ENCODE measurements at regions of chr17 and their contacts with region 1.

Region 1: DNA sequence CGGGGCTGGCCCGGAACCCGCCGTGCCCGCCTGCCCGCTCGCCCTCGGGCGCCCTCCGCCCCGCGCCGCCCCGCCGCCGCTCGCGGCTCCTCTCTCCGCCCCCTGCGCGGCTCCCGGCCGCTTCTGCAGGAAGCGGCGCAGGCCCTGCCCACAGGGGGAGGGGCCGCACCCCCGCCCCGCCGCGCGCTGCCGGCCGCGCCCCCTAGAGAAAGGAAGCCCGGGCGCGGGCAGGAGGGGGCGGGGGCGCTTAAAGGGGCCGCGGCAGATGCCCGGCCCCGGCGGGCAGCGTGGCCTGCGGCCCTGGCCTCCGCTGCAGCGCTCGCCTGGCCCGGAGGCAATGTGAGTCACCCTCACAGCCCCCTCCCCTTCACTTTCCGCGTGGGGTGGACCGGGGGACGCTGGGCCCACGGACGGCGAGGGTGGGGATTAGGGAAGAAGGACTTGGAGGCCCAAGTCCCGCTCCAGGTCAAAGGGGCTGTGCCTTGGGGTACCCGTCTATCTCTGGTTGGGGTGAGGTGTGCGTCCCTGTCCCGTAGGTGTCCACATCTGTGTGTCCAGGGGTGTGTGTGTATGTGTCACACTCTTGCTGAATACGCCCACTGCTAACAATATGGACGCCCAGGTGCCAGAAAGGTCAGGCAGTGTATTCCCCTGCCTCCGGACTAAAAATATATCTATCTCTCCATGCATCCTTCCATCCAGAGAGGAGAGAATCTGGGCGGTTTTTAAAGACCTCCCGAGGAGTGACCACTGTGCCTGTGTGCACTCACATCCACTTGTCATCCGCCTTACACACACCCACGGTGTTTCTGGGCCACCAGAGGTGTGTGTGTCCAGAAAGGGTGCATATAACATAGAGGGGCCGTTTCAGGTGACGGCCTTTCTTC is at the start of gene GIT1:
- DNase-seq: peak; percentile 80

Region 2: GRCh38 chr17:29420128-29420527 is 169.6 kb before region 1 on chr17:
- CTCF ChIA-PET with region 1: no interaction called
- POLR2A ChIA-PET with region 1: no interaction called
- DNase-seq: no peak

Region 3: DNA sequence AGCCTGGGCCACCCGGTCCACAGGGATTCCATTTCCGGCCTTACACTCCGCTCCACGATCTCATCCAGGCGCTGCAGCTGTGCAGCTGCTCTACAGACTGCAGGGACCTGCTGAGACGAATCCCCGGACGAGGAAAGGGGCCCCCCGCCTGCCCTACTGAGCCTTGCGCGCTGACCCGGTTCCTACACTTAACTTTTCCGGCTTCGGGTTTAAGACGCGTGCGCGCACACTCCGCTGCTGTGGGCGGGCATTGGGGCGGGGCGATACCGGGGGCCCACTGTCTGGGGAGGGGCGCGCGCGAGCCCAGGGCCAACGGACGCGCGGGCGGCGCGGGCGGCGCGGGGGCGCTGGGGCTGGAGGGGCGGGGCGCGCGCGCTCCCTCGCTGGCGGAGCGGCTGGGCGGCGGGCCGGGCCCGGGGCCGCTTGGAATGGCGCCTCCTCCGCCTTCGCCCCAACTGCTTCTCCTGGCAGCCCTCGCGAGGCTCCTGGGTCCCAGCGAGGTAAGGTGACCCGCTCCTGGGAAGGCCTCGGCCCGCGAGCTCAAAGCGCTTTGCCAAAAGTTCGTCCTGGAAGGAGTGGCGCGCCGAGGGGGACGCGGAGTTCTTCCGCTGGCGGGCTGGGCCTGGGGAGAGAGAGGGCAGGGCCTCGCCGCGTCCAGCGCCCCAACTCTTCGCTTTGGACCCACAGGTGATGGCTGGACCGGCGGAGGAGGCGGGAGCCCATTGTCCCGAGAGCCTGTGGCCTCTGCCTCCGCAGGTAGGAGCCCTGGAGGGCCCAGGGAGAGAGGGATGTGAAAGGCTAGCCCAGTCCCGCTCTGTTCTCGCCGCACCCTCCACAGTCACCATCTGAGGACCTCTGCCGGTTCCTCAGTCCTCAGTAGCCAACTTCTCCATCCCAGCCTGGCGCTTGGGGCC is 21.2 kb before region 1 on chr17 and contains the start of gene TP53I13:
- CTCF ChIA-PET with region 1: interaction called, 7 read pairs
- POLR2A ChIA-PET with region 1: interaction called, 32 read pairs
- DNase-seq: peak; percentile 77

Region 4: DNA sequence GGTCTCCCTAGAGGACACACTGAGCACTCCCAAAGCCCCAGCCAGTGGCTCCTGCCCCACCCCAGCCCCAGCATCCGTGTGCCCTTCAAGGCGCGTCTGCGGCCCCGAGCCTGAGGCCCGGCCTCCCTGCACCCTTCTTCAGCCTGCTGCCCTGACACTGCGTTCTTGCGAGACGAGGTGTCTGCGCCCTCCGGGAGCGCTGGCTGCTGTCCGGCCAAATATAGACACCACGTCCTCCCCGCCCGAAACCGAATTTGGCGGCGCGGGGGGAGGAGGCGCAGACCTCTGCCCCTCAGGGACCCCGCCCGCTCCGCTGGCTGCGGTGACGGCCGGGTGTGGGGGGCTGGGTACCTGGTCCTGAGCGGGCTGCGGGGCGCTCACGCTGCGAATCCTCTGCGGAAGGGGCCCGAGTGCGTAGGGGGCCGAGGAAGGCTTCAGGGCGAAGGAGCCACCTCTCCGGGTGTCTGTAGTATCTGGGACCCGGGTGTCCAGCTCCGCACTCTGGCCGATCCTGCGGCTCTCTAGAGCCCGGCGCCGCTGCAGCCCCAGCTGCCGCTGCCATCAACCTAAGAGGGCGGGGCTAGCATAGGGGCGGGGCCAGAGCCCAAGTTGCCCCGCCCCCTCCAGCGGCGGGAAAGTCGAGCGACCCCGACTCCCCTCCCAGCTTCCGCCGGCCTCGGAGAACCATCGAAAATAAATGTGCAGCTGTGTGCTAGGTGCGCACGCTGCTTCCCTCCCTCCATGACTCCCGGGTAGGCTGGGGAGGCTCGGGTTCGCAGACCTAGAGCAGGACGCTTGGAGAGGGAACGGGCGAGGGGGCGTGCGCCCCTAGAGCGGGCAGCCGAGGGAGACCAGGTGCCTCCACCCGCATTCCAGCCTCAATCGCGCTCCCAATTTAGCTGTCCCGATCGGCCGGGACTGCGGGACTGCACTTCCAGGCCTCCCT is 32.8 kb after region 1 on chr17 and contains the start of gene CORO6:
- CTCF ChIA-PET with region 1: interaction called, 4 read pairs
- POLR2A ChIA-PET with region 1: interaction called, 16 read pairs
- DNase-seq: peak; percentile 86

Region 5: DNA sequence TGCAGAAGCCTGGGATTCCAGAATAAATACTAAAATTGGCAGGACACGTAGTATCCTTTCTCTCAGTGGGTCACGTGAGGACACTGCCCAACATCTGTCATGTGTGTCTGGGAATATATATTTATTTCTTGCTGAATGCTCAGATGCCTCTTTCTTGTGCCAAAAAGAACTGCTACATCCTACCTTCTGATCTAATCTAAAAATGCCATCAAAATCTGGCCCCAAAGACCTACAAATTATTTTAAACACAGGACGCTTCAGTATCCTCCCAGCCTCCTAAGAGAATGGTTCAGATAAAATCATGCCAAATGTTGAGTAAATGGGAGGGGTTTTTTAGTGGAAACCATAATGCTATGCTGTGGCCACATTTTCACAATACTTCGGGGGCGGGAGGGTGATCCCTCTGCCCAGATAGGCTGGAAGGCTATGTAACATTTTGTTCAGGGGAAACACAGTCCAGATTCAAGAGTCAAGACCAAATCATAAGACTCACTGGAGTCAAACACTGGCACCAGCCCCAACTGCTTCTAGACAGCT is 55.8 kb after region 1 on chr17:
- CTCF ChIA-PET with region 1: no interaction called
- POLR2A ChIA-PET with region 1: no interaction called
- DNase-seq: no peak

Region 6: GRCh38 chr17:29682054-29682453 is 92.3 kb after region 1 on chr17:
- CTCF ChIA-PET with region 1: no interaction called
- POLR2A ChIA-PET with region 1: no interaction called
- DNase-seq: no peak